ENCODE measurements at regions of chr4 and their contacts with region 1.

Region 1: GRCh38 chr4:80215449-80216052 is 18.2 kb downstream of the PRDM8 start:
- DNase-seq: peak; percentile 29
- CTCF ChIP-seq: peak; percentile 63

Region 2: DNA sequence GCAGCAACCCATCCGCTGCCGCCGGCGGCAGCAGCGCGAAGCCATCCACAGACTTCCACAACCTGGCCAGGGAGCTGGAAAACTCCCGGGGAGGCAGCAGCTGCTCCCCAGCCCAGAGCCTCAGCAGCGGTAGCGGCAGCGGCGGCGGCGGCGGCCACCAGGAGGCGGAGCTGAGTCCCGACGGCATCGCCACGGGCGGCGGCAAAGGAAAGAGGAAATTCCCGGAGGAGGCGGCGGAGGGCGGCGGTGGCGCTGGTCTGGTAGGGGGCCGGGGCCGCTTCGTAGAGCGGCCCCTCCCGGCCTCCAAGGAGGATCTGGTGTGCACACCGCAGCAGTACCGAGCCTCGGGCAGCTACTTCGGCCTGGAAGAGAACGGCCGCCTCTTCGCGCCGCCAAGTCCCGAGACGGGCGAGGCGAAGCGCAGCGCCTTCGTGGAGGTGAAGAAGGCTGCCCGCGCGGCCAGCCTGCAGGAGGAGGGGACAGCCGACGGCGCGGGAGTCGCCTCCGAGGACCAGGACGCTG is 13.3 kb before region 1 on chr4:
- CTCF ChIA-PET with region 1: interaction called, 23 read pairs
- POLR2A ChIA-PET with region 1: no interaction called
- DNase-seq: peak; percentile 81
- CTCF ChIP-seq: peak; percentile 94